ENCODE measurements at regions of chr19 and their contacts with region 1.

Region 1: DNA sequence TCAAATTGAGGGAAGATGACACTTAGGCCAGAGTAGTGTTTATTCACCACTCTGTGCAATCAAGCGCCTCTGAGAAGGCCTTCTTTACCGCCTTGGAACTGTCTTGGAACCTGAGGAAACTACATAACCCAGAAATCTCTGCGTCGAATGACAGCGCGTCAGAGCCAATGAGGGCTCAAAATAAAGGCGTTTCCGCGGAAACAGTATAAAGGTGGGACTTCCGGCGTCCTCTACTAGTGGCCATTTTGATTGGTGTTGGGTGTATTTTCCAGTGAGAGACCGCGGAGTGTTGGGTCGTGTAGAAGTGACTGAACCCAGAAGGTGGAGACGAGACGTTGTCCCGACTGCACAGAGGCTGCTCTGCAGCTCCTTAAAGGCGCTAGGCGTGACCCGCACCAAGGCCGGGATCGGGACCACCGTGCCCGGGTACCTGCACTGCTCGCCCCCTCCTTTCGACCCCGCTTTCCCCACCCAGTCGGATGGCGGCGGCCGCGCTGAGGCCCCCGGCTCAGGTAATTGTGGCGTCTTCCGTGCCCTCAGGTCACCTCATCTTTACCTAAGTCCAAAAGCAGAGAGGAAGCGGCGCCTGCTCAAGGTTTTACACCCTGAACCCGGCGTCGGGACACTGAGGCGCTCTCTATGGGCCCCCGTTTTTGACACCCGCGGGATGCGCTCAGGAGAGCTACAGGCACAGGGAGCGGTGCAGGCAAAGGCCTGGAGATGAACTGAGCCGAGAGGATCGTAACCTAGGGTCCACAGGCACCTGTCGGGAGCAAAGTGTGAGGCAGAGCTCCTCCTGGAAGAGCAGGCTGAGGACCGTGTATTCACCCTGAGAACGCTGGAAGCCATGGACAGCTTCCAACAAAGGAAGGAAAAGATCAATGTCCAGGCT is at the start of gene ZNF776:
- DNase-seq: peak; percentile 91
- ATAC-seq: peak; percentile 97
- H3K4me3 ChIP-seq: peak within 1 kb of the TSS; percentile 66 to 92 (median 74)
- H3K4me3 Mint-ChIP-seq: peak within 1 kb of the TSS; percentile 91
- H3K27ac ChIP-seq: peak within 1 kb of the TSS; percentile 75 to 84
- H3K27ac Mint-ChIP-seq: peak within 1 kb of the TSS; percentile 88
- H3K4me1 ChIP-seq: peaks cover 15 to 19% of the 10 kb centered on the region in 2 donors
- H3K4me1 Mint-ChIP-seq: peaks cover 39% of the 10 kb centered on the region
- H3K27me3 ChIP-seq: no peaks in the 10 kb centered on the region
- H3K27me3 Mint-ChIP-seq: no peaks in the 10 kb centered on the region
- CTCF ChIP-seq: no peak
- total RNA-seq, gene ZNF776: 47.5 and 51.6 TPM in 2 replicates

Region 2: DNA sequence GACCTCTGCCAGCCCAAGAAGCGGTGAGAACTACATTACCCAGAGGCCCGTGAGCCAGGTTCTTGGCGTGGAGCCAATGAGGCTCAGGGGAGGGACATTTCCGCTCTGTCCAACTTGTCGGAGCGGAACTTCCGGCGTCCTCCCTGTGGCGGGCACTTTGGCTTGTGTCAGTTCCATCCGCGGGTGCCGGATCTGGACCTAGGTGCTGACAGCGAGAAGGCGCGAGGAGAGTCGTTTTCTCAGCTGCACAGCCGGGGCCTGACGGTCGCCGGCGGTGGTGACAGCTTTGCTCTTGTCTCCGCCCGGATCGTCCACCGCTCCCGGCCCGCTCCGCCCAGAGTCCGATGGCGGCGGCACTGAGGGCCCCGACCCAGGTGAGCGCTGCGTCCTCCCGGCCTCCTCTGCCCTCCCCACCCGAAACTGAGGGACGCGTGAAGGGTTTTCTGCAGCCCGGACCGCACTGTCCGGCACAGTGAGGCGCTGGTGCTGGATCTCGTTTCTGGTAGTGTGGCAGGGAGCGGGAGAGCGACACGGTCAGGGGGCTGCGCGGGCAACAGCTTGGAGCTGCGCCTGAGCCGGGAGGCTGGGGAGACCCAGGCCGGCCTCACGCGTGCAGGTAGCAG is 147.0 kb before region 1 on chr19 and contains the start of gene ZNF530:
- CTCF ChIA-PET with region 1: no interaction called
- POLR2A ChIA-PET with region 1: no interaction called
- intact Hi-C with region 1: loop called (anchors 1 kb)
- DNase-seq: peak; percentile 88
- ATAC-seq: peak; percentile 99
- H3K4me3 ChIP-seq: peak within 1 kb of the TSS; percentile 44 to 81 (median 77)
- H3K4me3 Mint-ChIP-seq: peak within 1 kb of the TSS; percentile 90
- H3K27ac ChIP-seq: peak within 1 kb of the TSS in 1 of 2 donors; percentile 52
- H3K27ac Mint-ChIP-seq: peak within 1 kb of the TSS; percentile 79
- H3K4me1 ChIP-seq: peaks cover 11 to 14% of the 10 kb centered on the region in 2 donors
- H3K4me1 Mint-ChIP-seq: peaks cover 20% of the 10 kb centered on the region
- H3K27me3 ChIP-seq: no peaks in the 10 kb centered on the region
- H3K27me3 Mint-ChIP-seq: peaks cover 3% of the 10 kb centered on the region
- CTCF ChIP-seq: no peak
- total RNA-seq, gene ZNF530: 11.2 and 11.6 TPM in 2 replicates

Region 3: DNA sequence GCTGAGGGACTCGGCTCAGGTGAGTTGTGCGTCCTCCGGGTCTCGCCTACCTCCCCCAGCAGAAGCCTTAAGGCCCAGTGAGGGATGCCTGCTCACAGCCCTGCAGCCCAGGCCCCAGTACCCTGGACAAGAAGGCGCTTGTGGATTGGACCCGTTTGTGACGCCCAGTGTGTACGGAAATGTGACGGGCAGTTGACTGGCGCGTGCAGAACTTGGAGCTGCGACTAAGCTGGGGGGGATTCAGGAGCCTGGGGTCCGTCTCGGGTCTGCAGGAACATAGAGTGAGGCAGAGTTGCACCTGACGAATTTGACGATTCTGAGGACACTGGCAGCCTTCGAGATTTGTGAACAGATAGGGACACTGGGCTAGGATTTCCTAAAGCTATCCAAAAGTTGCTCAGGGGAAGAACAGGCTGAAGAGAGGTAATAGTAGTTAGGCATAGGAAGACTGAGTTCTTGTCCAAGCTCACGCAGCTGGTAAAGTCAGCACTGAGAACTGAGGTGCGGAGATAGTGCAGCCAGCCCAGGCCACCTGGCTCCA is 64.5 kb before region 1 on chr19:
- CTCF ChIA-PET with region 1: no interaction called
- POLR2A ChIA-PET with region 1: no interaction called
- intact Hi-C with region 1: loop called (anchors 1 kb)
- DNase-seq: no peak
- ATAC-seq: no peak
- H3K4me3 ChIP-seq: peak overlapping the region; percentile 65 to 98 (median 90)
- H3K4me3 Mint-ChIP-seq: peak overlapping the region; percentile 98
- H3K27ac ChIP-seq: peak overlapping the region; percentile 50 to 57
- H3K27ac Mint-ChIP-seq: peak overlapping the region; percentile 91
- H3K4me1 ChIP-seq: peaks cover 13 to 25% of the 10 kb centered on the region in 2 donors
- H3K4me1 Mint-ChIP-seq: peaks cover 38% of the 10 kb centered on the region
- H3K27me3 ChIP-seq: peaks cover 0 to 4% (median 0%) of the 10 kb centered on the region in 4 experiments
- H3K27me3 Mint-ChIP-seq: peaks cover 15% of the 10 kb centered on the region
- CTCF ChIP-seq: no peak

Region 4: DNA sequence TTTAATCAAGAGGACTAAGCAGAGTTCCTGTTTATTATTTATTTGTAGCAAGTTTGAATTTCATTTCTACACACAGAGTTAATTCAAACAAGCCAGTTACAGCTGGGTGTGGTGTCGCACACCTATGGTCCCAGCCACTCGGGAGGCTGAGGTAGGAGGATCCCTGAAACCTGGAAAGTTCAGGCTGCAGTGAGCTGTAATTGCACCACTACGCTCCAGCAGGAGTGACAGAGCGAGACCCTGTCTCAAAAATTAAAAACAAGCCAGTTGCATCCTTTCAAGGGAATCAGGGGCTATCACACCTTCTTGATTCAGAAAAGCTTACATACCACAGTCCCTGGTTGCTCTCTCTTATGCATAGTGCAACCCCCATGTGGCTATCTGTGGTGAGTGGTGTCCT is 42.5 kb after region 1 on chr19:
- CTCF ChIA-PET with region 1: no interaction called
- POLR2A ChIA-PET with region 1: no interaction called
- intact Hi-C with region 1: no loop called
- DNase-seq: no peak
- ATAC-seq: no peak
- H3K4me3 ChIP-seq: no peak overlapping the region
- H3K4me3 Mint-ChIP-seq: no peak overlapping the region
- H3K27ac ChIP-seq: no peak overlapping the region
- H3K27ac Mint-ChIP-seq: no peak overlapping the region
- H3K4me1 ChIP-seq: no peaks in the 10 kb centered on the region
- H3K4me1 Mint-ChIP-seq: peaks cover 9% of the 10 kb centered on the region
- H3K27me3 ChIP-seq: no peaks in the 10 kb centered on the region
- H3K27me3 Mint-ChIP-seq: no peaks in the 10 kb centered on the region
- CTCF ChIP-seq: no peak

Region 5: DNA sequence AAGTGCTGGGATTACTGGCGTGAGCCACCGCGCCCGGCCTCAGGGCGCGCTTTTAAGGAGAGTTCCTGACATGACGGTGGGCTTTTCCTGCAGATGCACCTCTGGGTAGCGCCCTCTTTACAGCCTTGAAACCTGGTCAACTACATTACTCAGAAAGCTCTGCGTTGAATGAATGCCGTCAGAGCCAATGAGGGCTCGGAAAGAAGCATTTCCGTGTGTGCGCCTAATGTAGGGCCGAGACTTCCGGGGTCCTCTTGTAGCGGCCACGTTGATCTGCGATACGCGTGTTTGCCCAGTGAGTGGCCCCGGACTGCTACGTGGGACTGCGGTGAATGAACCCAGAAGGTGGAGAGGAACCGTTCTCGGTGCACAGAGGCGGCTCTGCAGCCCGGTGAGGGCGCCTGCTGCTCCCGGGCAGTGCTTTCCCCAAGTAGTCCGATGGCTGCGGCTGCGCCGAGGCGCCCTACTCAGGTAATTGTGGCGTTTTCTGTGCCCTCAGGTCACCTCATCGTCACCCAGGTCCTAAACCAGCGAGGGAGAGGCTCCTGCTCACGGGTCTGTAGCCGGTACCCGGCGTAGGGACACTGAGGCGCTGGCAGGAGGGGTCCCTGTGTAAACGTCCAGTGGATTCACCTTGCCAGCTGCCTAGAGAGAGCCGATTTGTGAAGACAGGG is 72.8 kb after region 1 on chr19:
- CTCF ChIA-PET with region 1: no interaction called
- POLR2A ChIA-PET with region 1: no interaction called
- intact Hi-C with region 1: loop called (anchors 1 kb)
- DNase-seq: peak; percentile 90
- ATAC-seq: peak; percentile 83
- H3K4me3 ChIP-seq: peak overlapping the region; percentile 78 to 92 (median 83)
- H3K4me3 Mint-ChIP-seq: peak overlapping the region; percentile 94
- H3K27ac ChIP-seq: peak overlapping the region; percentile 75 to 88
- H3K27ac Mint-ChIP-seq: peak overlapping the region; percentile 97
- H3K4me1 ChIP-seq: peaks cover 12 to 17% of the 10 kb centered on the region in 2 donors
- H3K4me1 Mint-ChIP-seq: peaks cover 58% of the 10 kb centered on the region
- H3K27me3 ChIP-seq: no peaks in the 10 kb centered on the region
- H3K27me3 Mint-ChIP-seq: no peaks in the 10 kb centered on the region
- CTCF ChIP-seq: no peak

Region 6: DNA sequence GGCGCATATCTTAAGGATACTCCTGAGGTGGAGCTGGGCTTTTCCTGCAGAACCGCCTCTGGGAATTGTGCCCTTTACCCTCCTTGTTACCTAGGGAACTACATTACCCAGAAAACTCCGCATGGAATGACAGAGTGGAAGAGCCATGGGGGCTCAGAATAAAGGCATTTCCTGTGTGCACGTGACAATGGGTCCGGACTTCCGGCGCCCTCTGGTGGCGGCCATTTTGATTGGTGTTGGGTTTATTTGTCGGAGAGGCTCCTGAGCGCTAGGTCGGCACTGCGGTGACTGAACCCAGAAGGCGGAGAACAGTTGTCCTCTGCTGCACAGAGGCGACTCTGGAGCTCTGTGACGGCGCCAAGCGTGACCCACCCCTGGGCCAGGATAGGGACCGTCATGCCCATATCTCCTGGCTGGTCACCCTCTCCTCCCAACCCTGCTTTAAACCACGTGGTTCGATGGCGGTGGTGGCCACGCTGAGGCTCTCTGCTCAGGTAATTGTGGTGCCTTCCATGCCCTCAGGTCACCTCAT is 83.3 kb after region 1 on chr19 and contains the start of gene ZNF587B:
- CTCF ChIA-PET with region 1: no interaction called
- POLR2A ChIA-PET with region 1: no interaction called
- intact Hi-C with region 1: no loop called
- DNase-seq: peak; percentile 42
- ATAC-seq: no peak
- H3K4me3 ChIP-seq: no peak within 1 kb of the TSS
- H3K4me3 Mint-ChIP-seq: no peak within 1 kb of the TSS
- H3K27ac ChIP-seq: no peak within 1 kb of the TSS
- H3K27ac Mint-ChIP-seq: no peak within 1 kb of the TSS
- H3K4me1 ChIP-seq: no peaks in the 10 kb centered on the region
- H3K4me1 Mint-ChIP-seq: peaks cover 7% of the 10 kb centered on the region
- H3K27me3 ChIP-seq: no peaks in the 10 kb centered on the region
- H3K27me3 Mint-ChIP-seq: no peaks in the 10 kb centered on the region
- CTCF ChIP-seq: peak; percentile 39
- total RNA-seq, gene ZNF587B: 29.1 and 31.5 TPM in 2 replicates

Region 7: GRCh38 chr19:57888560-57889231 is 141.9 kb after region 1 on chr19 and contains the start of gene ZNF814:
- CTCF ChIA-PET with region 1: no interaction called
- POLR2A ChIA-PET with region 1: no interaction called
- intact Hi-C with region 1: loop called (anchors 5 kb)
- DNase-seq: peak; percentile 91
- ATAC-seq: peak; percentile 93
- H3K4me3 ChIP-seq: peak within 1 kb of the TSS; percentile 75 to 97 (median 85)
- H3K4me3 Mint-ChIP-seq: peak within 1 kb of the TSS; percentile 95
- H3K27ac ChIP-seq: peak within 1 kb of the TSS; percentile 76 to 86
- H3K27ac Mint-ChIP-seq: peak within 1 kb of the TSS; percentile 90
- H3K4me1 ChIP-seq: peaks cover 17 to 19% of the 10 kb centered on the region in 2 donors
- H3K4me1 Mint-ChIP-seq: peaks cover 31% of the 10 kb centered on the region
- H3K27me3 ChIP-seq: no peaks in the 10 kb centered on the region
- H3K27me3 Mint-ChIP-seq: no peaks in the 10 kb centered on the region
- CTCF ChIP-seq: peak; percentile 40
- total RNA-seq, gene ZNF814: 83.9 and 95.1 TPM in 2 replicates

Measured in B cell (primary cell).